MCF 10A (cell line): ENCODE measurements at regions of chr11 and their contacts with region 1.

Region 1: DNA sequence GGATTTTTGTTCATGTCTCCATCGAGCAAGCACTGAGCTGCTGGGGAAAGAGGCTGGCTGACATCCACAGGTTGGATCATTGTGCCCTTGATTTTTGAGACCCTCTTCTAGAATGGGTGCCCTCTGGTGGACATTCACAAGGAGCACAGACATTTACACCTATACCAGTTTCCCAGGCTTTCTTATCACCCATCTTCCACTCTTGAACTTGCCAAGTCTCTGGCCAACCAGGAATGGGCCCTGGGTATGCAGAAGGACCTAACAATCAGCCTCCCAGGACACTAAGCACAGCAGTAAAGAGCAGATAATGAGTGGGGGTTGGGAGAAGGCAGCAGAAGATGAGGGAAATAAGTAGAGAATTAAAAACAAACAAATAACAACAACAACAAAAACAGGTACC is 5.7 kb upstream of the INTS4 start:
- DNase-seq: peak; percentile 79
- H3K4me3 Mint-ChIP-seq: no peak overlapping the region
- H3K27ac Mint-ChIP-seq: no peak overlapping the region
- H3K4me1 Mint-ChIP-seq: peaks cover 6% of the 10 kb centered on the region
- H3K27me3 Mint-ChIP-seq: no peaks in the 10 kb centered on the region
- CTCF ChIP-seq: peak; percentile 70

Region 2: GRCh38 chr11:77776455-77776854 is 223.7 kb before region 1 on chr11:
- CTCF ChIA-PET with region 1: interaction called, 4 read pairs
- POLR2A ChIA-PET with region 1: no interaction called
- intact Hi-C with region 1: loop called (anchors 1 kb)
- DNase-seq: peak; percentile 30
- H3K4me3 Mint-ChIP-seq: no peak overlapping the region
- H3K27ac Mint-ChIP-seq: no peak overlapping the region
- H3K4me1 Mint-ChIP-seq: no peaks in the 10 kb centered on the region
- H3K27me3 Mint-ChIP-seq: no peaks in the 10 kb centered on the region
- CTCF ChIP-seq: peak; percentile 48

Region 3: DNA sequence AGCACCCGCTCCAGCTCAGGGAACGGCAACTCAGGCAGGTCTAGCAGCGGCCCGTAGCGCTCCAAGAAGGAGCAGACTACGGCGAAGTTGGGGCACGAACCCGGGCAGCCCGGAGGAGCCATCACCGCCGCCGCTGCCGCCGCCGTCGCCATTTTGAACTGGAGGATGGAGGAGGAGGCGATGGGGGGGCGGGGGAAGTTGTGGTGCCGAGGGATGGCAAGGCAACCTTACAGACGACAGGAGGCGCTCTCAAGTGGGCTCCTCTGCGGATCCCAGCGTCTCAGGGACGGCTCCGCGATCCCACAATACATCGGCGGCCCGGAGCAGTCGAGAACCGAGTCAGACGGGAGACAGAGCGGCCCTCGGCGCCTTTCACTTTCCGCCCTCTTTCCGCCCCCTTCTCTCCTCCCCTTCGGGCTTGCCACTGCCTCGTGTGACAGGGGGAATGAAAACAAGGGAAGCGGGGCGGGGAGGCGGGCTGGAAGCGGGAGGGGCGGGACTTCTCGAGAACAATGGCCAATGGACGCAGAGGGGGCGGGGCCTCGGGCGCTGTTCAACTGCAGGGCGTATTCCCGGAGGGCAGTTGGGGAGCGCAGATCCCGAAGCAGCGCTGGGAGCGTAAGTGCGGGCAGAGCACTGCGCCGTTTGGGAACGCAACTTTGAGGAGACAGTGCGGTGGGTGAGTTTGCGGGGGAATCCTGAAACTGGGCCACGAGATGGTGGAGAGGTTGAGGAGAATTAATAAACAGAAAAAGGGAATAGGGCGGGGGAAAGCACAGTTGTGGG is 179.4 kb before region 1 on chr11 and contains the starts of genes AAMDC and RSF1:
- CTCF ChIA-PET with region 1: interaction called, 5 read pairs
- POLR2A ChIA-PET with region 1: interaction called, 23 read pairs
- intact Hi-C with region 1: loop called (anchors 1 kb)
- DNase-seq: peak; percentile 99
- H3K4me3 Mint-ChIP-seq: peak within 1 kb of the TSS; percentile 93
- H3K27ac Mint-ChIP-seq: peak within 1 kb of the TSS; percentile 90
- H3K4me1 Mint-ChIP-seq: peaks cover 7% of the 10 kb centered on the region
- H3K27me3 Mint-ChIP-seq: no peaks in the 10 kb centered on the region
- CTCF ChIP-seq: peak; percentile 72
- total RNA-seq, gene AAMDC: 13.0 and 13.2 TPM in 2 replicates
- total RNA-seq, gene RSF1: 62.0 and 71.2 TPM in 2 replicates

Region 4: GRCh38 chr11:78010310-78010709 is 10.1 kb after region 1 on chr11:
- CTCF ChIA-PET with region 1: interaction called, 21 read pairs
- POLR2A ChIA-PET with region 1: interaction called, 3 read pairs
- intact Hi-C with region 1: no loop called
- DNase-seq: no peak
- H3K4me3 Mint-ChIP-seq: no peak overlapping the region
- H3K27ac Mint-ChIP-seq: no peak overlapping the region
- H3K4me1 Mint-ChIP-seq: no peaks in the 10 kb centered on the region
- H3K27me3 Mint-ChIP-seq: no peaks in the 10 kb centered on the region
- CTCF ChIP-seq: no peak

Region 5: DNA sequence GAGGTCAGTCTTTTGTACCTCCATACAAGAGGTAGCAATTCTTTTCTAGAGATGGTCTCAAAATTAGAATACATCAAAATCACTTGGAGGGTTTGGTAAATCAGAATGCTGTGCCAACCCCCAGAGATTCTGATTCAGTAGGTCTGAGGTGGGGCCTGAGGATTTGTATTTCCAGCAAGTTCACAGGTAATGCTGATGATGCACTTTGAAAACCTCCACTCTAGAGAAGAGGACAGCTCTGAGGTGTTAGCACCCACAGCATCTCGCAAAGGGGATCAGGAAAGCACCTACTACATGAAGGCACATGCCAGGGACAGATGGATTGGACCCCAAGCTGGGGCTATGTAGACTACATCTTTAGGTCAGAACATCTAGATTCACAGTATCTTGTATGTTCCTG is 15.7 kb after region 1 on chr11:
- CTCF ChIA-PET with region 1: interaction called, 11 read pairs
- POLR2A ChIA-PET with region 1: interaction called, 4 read pairs
- intact Hi-C with region 1: no loop called
- DNase-seq: no peak
- H3K4me3 Mint-ChIP-seq: no peak overlapping the region
- H3K27ac Mint-ChIP-seq: no peak overlapping the region
- H3K4me1 Mint-ChIP-seq: peaks cover 11% of the 10 kb centered on the region
- H3K27me3 Mint-ChIP-seq: no peaks in the 10 kb centered on the region
- CTCF ChIP-seq: no peak